Natural killer cell (primary cell): ENCODE measurements at regions of chr19 and their contacts with region 1.

Region 1: GRCh38 chr19:32691291-32691951 is at the start of gene NUDT19:
- DNase-seq: peak; percentile 59 to 82
- ATAC-seq: peak; percentile 72 to 77 (median 76)
- H3K4me3 ChIP-seq: peak within 1 kb of the TSS; percentile 55
- H3K4me3 Mint-ChIP-seq: peak within 1 kb of the TSS; percentile 94
- H3K27ac ChIP-seq: peak within 1 kb of the TSS; percentile 57
- H3K27ac Mint-ChIP-seq: peak within 1 kb of the TSS; percentile 88 to 90
- H3K4me1 ChIP-seq: peaks cover 49% of the 10 kb centered on the region
- H3K4me1 Mint-ChIP-seq: peaks cover 49% of the 10 kb centered on the region in 2 donors
- H3K27me3 ChIP-seq: no peaks in the 10 kb centered on the region
- H3K27me3 Mint-ChIP-seq: no peaks in the 10 kb centered on the region
- CTCF ChIP-seq: no peak
- total RNA-seq, gene NUDT19: 6.4 to 9.6 (median 8.2) TPM

Region 2: GRCh38 chr19:32748497-32748896 is 57.1 kb after region 1 on chr19:
- intact Hi-C with region 1: loop called (anchors 2 kb)
- DNase-seq: peak in 1 of 2 donors; percentile 53
- ATAC-seq: no peak
- H3K4me3 ChIP-seq: no peak overlapping the region
- H3K4me3 Mint-ChIP-seq: no peak overlapping the region
- H3K27ac ChIP-seq: no peak overlapping the region
- H3K27ac Mint-ChIP-seq: peak overlapping the region in 1 of 2 donors; percentile 34
- H3K4me1 ChIP-seq: peaks cover 21% of the 10 kb centered on the region
- H3K4me1 Mint-ChIP-seq: peaks cover 0 to 4% of the 10 kb centered on the region in 2 donors
- H3K27me3 ChIP-seq: peaks cover 3% of the 10 kb centered on the region
- H3K27me3 Mint-ChIP-seq: peaks cover 0 to 6% of the 10 kb centered on the region in 2 donors
- CTCF ChIP-seq: no peak

Region 3: DNA sequence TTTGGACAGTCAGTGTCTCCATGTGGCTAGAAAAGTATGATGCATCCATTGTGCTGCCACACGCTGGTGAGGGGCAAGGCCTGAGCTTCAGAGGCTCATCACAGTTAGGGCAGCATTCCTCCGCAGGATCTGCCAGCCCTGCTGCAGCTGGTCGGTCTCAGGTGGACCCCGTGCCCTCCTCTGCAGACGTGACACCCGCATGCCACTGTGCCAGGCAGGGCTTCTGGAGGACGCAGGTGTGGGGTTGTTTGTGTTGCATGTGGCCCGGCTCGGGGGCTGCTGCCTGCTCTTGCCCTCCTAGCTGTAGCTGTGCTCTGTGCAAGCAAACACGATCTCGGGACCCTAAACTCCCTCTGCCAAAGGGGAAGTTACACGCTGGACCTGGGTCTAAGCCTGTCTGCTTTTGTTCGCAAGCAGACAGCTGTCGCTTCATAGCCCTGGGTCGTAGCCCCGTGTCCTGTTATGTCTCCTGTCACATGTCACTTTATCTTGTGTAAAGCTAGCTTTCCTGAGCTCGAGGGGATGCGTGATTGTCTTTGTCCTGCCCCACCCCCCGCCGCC is 132.8 kb after region 1 on chr19:
- intact Hi-C with region 1: no loop called
- DNase-seq: no peak
- ATAC-seq: no peak
- H3K4me3 ChIP-seq: no peak overlapping the region
- H3K4me3 Mint-ChIP-seq: no peak overlapping the region
- H3K27ac ChIP-seq: no peak overlapping the region
- H3K27ac Mint-ChIP-seq: no peak overlapping the region
- H3K4me1 ChIP-seq: peaks cover 12% of the 10 kb centered on the region
- H3K4me1 Mint-ChIP-seq: peaks cover 0 to 5% of the 10 kb centered on the region in 2 donors
- H3K27me3 ChIP-seq: no peaks in the 10 kb centered on the region
- H3K27me3 Mint-ChIP-seq: peaks cover 14 to 32% of the 10 kb centered on the region in 2 donors
- CTCF ChIP-seq: no peak